HCT116 (cell line): ENCODE measurements at regions of chr1 and their contacts with region 1.

Region 1: DNA sequence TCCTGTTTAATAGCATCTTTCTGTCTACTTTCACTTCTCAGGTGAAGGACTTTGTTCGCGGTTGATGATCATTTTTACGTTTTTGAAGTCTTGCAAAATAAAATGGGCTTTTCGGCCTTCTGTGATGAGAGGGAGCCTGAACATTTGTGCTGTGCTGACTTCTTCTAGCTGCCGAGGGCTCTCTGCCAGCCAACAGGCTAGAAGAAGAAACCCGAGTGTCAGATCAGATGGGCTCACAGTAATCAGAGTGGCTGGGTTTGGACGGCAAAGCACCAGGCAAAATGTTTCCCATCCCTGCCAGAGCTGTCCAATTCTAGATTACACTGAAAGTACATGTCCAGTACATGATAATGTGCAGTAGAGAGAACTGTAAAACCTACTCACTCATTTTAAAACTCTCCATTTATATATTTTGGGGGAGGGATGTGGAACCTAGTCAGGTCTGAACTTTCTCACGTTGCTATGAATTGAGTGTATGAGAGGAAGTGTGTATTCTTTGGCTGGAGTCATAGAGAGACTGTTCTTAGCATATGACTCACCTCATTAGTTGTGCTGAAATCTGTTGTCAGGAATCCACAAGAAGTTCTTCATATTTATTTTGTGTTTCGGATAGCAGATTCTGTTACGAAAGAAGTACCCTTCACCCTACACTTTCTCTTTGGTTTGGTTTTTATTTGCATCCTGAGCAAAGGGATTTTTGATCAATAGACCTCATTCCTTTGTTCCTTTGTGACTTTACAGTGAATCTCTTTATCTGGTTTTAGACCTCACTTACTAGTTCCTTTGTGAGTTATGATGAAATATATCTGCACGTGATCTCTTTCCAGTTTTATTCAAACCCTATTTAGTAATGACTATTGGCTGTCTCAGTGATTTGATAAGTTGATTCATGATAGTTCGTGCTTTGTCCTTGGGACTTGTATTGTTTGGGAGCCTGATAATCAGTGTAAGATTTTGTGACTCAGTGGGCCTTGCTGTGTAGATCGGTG is 4.8 kb downstream of the ATP1A1 start:
- DNase-seq: no peak
- ATAC-seq: no peak
- H3K4me3 ChIP-seq: no peak overlapping the region
- H3K27ac ChIP-seq: peak overlapping the region; percentile 15; the same call in 1 of the 2 replicates
- H3K4me1 ChIP-seq: peaks cover 37 to 67% of the 10 kb centered on the region in 2 experiments
- H3K27me3 ChIP-seq: no peaks in the 10 kb centered on the region
- CTCF ChIP-seq: no peak
- POLR2A ChIP-seq: no peak
- RAD21 ChIP-seq: no peak

Region 2: GRCh38 chr1:116139592-116140134 is 238.2 kb before region 1 on chr1:
- CTCF ChIA-PET with region 1: interaction called, 7 read pairs
- POLR2A ChIA-PET with region 1: interaction called, 4 read pairs
- RAD21 ChIA-PET with region 1: no interaction called
- intact Hi-C with region 1: loop called (anchors 5 kb)
- DNase-seq: no peak
- ATAC-seq: no peak
- H3K4me3 ChIP-seq: no peak overlapping the region
- H3K27ac ChIP-seq: no peak overlapping the region
- H3K4me1 ChIP-seq: peaks cover 2 to 8% of the 10 kb centered on the region in 2 experiments; a peak in 2 of 4 replicates
- H3K27me3 ChIP-seq: no peaks in the 10 kb centered on the region
- CTCF ChIP-seq: no peak
- POLR2A ChIP-seq: no peak
- RAD21 ChIP-seq: no peak

Region 3: GRCh38 chr1:116418091-116418830 is 40.4 kb after region 1 on chr1:
- CTCF ChIA-PET with region 1: no interaction called
- POLR2A ChIA-PET with region 1: no interaction called
- RAD21 ChIA-PET with region 1: no interaction called
- intact Hi-C with region 1: no loop called
- DNase-seq: peak; percentile 68
- ATAC-seq: peak; percentile 93
- H3K4me3 ChIP-seq: peak overlapping the region; percentile 88 to 89
- H3K27ac ChIP-seq: peak overlapping the region; percentile 38
- H3K4me1 ChIP-seq: peaks cover 8 to 28% of the 10 kb centered on the region in 2 experiments; a peak in 3 of 4 replicates
- H3K27me3 ChIP-seq: no peaks in the 10 kb centered on the region
- CTCF ChIP-seq: no peak
- POLR2A ChIP-seq: peak; percentile 9
- RAD21 ChIP-seq: no peak

Region 4: DNA sequence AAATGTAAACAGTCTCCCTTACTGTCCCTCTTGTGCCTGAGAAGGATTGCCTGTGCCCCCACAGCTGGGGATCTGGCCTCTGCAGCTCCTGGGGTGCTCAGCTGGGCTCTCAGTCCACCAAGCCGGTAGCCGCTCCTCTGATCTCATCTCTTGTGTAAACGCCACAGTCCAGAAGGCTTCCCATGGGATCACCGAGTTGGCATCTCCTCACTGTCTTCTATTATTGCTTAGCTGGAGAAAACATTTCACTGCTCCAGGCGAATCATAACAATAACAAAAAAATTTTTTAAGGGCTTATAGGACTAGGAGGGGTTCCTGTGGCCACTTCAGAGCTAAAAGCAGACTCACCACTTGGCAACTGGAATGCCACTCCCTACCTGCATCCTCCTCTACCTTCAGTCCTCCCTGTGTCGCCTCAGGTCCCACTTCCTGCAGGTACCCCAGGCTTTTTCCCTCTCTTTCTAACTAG is 71.0 kb after region 1 on chr1:
- CTCF ChIA-PET with region 1: no interaction called
- POLR2A ChIA-PET with region 1: no interaction called
- RAD21 ChIA-PET with region 1: no interaction called
- intact Hi-C with region 1: no loop called
- DNase-seq: no peak
- ATAC-seq: no peak
- H3K4me3 ChIP-seq: no peak overlapping the region
- H3K27ac ChIP-seq: no peak overlapping the region
- H3K4me1 ChIP-seq: no peaks in the 10 kb centered on the region
- H3K27me3 ChIP-seq: no peaks in the 10 kb centered on the region
- CTCF ChIP-seq: no peak
- POLR2A ChIP-seq: no peak
- RAD21 ChIP-seq: no peak

Region 5: GRCh38 chr1:116498789-116499628 is 121.2 kb after region 1 on chr1:
- CTCF ChIA-PET with region 1: interaction called, 10 read pairs
- POLR2A ChIA-PET with region 1: no interaction called
- RAD21 ChIA-PET with region 1: interaction called in 1 of 2 experiments, 3 read pairs
- intact Hi-C with region 1: no loop called
- DNase-seq: peak; percentile 55
- ATAC-seq: peak; percentile 95
- H3K4me3 ChIP-seq: no peak overlapping the region
- H3K27ac ChIP-seq: no peak overlapping the region
- H3K4me1 ChIP-seq: peaks cover 6 to 15% of the 10 kb centered on the region in 2 experiments
- H3K27me3 ChIP-seq: no peaks in the 10 kb centered on the region
- CTCF ChIP-seq: peak; percentile 71 to 96 (median 87)
- POLR2A ChIP-seq: no peak
- RAD21 ChIP-seq: peak; percentile 97

Region 6: GRCh38 chr1:116504308-116505156 is 126.7 kb after region 1 on chr1:
- CTCF ChIA-PET with region 1: interaction called, 10 read pairs
- POLR2A ChIA-PET with region 1: no interaction called
- RAD21 ChIA-PET with region 1: interaction called in 1 of 2 experiments, 3 read pairs
- intact Hi-C with region 1: loop called (anchors 5 kb)
- DNase-seq: no peak
- ATAC-seq: peak; percentile 35
- H3K4me3 ChIP-seq: no peak overlapping the region
- H3K27ac ChIP-seq: peak overlapping the region; percentile 28
- H3K4me1 ChIP-seq: peaks cover 51 to 59% of the 10 kb centered on the region in 2 experiments
- H3K27me3 ChIP-seq: no peaks in the 10 kb centered on the region
- CTCF ChIP-seq: no peak
- POLR2A ChIP-seq: no peak
- RAD21 ChIP-seq: no peak

Region 7: GRCh38 chr1:116654355-116654754 is 276.5 kb after region 1 on chr1:
- CTCF ChIA-PET with region 1: no interaction called
- POLR2A ChIA-PET with region 1: no interaction called
- RAD21 ChIA-PET with region 1: no interaction called
- intact Hi-C with region 1: no loop called
- DNase-seq: no peak
- ATAC-seq: no peak
- H3K4me3 ChIP-seq: no peak overlapping the region
- H3K27ac ChIP-seq: no peak overlapping the region
- H3K4me1 ChIP-seq: no peaks in the 10 kb centered on the region
- H3K27me3 ChIP-seq: no peaks in the 10 kb centered on the region
- CTCF ChIP-seq: no peak
- POLR2A ChIP-seq: no peak
- RAD21 ChIP-seq: no peak